Activated CD4-positive, alpha-beta T cell treated with anti-CD3 and anti-CD28 coated beads for 36 hours (primary cell): ENCODE measurements at regions of chr9 and their contacts with region 1.

Region 1: GRCh38 chr9:98118640-98119601 is at the start of gene TRIM14:
- DNase-seq: peak; percentile 79
- ATAC-seq: peak; percentile 49
- H3K4me3 Mint-ChIP-seq: peak within 1 kb of the TSS; percentile 75
- H3K27ac Mint-ChIP-seq: peak within 1 kb of the TSS; percentile 91
- H3K4me1 Mint-ChIP-seq: peaks cover 47% of the 10 kb centered on the region
- H3K27me3 Mint-ChIP-seq: no peaks in the 10 kb centered on the region
- total RNA-seq, gene TRIM14: 54.6 to 59.6 TPM

Region 2: DNA sequence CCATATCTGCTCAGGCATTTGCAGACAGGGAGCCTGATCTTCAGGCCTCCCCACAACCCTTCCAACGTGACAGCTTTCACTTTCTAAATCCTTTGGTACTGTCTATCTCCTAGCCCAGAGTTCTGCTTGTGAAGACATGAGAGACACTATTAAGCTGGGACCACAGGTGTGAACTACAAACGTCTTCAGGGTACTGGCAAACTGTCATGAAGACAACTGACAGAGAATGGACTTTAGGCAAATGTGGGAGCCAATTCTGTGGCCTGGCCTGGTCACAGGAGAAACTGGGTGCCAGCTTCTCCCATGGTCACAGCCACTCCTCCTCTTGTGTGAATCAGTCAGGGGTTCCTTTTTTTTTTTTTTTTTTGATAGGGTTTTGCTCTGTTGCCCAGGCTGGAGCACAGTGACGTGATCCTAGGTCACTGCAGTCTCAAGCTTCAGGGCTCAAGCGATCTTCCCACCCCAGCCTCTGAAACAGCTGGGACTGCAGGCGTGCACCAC is 10.3 kb before region 1 on chr9:
- CTCF ChIA-PET with region 1: interaction called, 13 read pairs
- POLR2A ChIA-PET with region 1: interaction called, 5 read pairs
- intact Hi-C with region 1: loop called in 1 of 2 experiments (anchors 1 kb)
- DNase-seq: peak; percentile 60
- ATAC-seq: peak; percentile 88
- H3K4me3 Mint-ChIP-seq: peak overlapping the region; percentile 63
- H3K27ac Mint-ChIP-seq: peak overlapping the region; percentile 95
- H3K4me1 Mint-ChIP-seq: peaks cover 80% of the 10 kb centered on the region
- H3K27me3 Mint-ChIP-seq: no peaks in the 10 kb centered on the region